Naive thymus-derived CD4-positive, alpha-beta T cell (primary cell): ENCODE measurements at regions of chr1 and their contacts with region 1.

Region 1: DNA sequence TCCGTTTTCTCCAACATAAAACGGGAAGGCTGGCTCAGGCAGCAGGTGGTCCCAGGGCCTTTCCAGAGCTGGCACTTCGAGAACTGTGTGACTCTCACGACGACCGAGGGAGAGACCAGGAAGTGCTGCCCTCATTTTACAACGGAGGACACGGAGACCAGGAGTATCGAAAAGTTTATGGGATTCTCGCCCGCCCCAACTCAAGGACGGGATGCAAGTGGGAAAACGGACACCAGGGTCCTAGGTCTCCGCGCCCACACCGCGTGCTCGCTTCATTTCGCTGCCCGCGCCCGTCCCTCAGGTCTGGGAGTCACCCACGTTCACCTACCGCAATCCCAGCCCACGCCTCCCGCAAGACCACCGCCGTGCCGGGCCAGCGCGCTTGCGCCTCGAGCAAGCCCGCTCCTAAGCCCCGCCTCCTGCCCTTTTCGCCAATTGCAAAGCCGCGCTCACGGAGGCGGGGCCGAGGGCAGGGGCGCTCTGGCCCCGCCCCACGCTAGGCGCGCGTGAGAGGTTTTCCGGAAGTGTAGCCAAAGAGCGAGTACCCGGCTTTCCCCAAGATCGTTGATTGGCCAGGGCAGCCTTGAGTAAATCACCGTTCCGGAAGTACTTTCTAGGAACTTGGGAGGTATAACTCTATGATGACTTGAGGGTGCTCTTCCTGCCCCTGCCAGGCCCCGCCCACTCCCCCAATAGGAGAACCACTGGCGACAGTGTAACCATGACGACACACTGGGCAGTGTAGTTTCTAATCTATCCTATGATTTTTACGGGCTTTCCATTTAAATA is at the start of gene PARS2:
- DNase-seq: peak; percentile 89 to 98 (median 97)
- ATAC-seq: peak; percentile 96
- H3K4me3 ChIP-seq: peak within 1 kb of the TSS; percentile 95
- H3K4me3 Mint-ChIP-seq: peak within 1 kb of the TSS; percentile 94 to 97 (median 96)
- H3K27ac ChIP-seq: peak within 1 kb of the TSS; percentile 83
- H3K27ac Mint-ChIP-seq: peak within 1 kb of the TSS; percentile 81 to 97 (median 93)
- H3K4me1 ChIP-seq: peaks cover 0 to 9% of the 10 kb centered on the region in 2 donors
- H3K4me1 Mint-ChIP-seq: peaks cover 14 to 26% (median 24%) of the 10 kb centered on the region in 7 donors
- H3K27me3 ChIP-seq: no peaks in the 10 kb centered on the region
- H3K27me3 Mint-ChIP-seq: no peaks in the 10 kb centered on the region
- total RNA-seq, gene PARS2: 0.66 to 7.6 (median 4.7) TPM

Region 2: GRCh38 chr1:52920791-52921291 is 1843.5 kb before region 1 on chr1:
- CTCF ChIA-PET with region 1: no interaction called
- POLR2A ChIA-PET with region 1: no interaction called
- intact Hi-C with region 1: loop called in 1 of 2 experiments (anchors 5 kb)
- DNase-seq: no peak
- ATAC-seq: no peak
- H3K4me3 ChIP-seq: peak overlapping the region; percentile 67
- H3K4me3 Mint-ChIP-seq: peak overlapping the region; percentile 65 to 89 (median 84)
- H3K27ac ChIP-seq: peak overlapping the region; percentile 74
- H3K27ac Mint-ChIP-seq: peak overlapping the region; percentile 51 to 86 (median 70)
- H3K4me1 ChIP-seq: peaks cover 0 to 12% of the 10 kb centered on the region in 2 donors
- H3K4me1 Mint-ChIP-seq: peaks cover 16 to 41% (median 31%) of the 10 kb centered on the region in 7 donors
- H3K27me3 ChIP-seq: no peaks in the 10 kb centered on the region
- H3K27me3 Mint-ChIP-seq: peaks cover 0 to 4% (median 0%) of the 10 kb centered on the region in 5 donors

Region 3: DNA sequence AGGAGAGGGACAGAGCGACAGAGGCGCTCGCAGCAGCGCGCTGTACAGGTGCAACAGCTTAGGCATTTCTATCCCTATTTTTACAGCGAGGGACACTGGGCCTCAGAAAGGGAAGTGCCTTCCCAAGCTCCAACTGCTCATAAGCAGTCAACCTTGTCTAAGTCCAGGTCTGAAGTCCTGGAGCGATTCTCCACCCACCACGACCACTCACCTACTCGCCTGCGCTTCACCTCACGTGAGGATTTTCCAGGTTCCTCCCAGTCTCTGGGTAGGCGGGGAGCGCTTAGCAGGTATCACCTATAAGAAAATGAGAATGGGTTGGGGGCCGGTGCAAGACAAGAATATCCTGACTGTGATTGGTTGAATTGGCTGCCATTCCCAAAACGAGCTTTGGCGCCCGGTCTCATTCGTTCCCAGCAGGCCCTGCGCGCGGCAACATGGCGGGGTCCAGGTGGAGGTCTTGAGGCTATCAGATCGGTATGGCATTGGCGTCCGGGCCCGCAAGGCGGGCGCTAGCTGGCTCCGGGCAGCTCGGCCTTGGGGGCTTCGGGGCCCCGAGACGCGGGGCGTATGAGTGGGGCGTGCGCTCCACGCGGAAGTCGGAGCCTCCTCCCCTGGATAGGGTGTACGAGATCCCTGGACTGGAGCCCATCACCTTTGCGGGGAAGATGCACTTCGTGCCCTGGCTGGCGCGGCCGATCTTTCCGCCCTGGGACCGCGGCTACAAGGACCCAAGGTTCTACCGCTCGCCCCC is 564.4 kb before region 1 on chr1 and contains the starts of genes CYB5RL and MRPL37:
- CTCF ChIA-PET with region 1: no interaction called
- POLR2A ChIA-PET with region 1: no interaction called
- intact Hi-C with region 1: loop called in 1 of 2 experiments (anchors 1 kb)
- DNase-seq: peak; percentile 65 to 94 (median 91)
- ATAC-seq: peak; percentile 99
- H3K4me3 ChIP-seq: peak within 1 kb of the TSS; percentile 69
- H3K4me3 Mint-ChIP-seq: peak within 1 kb of the TSS; percentile 90 to 96 (median 92)
- H3K27ac ChIP-seq: peak within 1 kb of the TSS; percentile 81
- H3K27ac Mint-ChIP-seq: peak within 1 kb of the TSS; percentile 64 to 93 (median 87)
- H3K4me1 ChIP-seq: peaks cover 9 to 17% of the 10 kb centered on the region in 2 donors
- H3K4me1 Mint-ChIP-seq: peaks cover 27 to 44% (median 40%) of the 10 kb centered on the region in 7 donors
- H3K27me3 ChIP-seq: no peaks in the 10 kb centered on the region
- H3K27me3 Mint-ChIP-seq: no peaks in the 10 kb centered on the region
- total RNA-seq, gene CYB5RL: 5.1 to 13.5 (median 7.1) TPM
- total RNA-seq, gene MRPL37: 25.4 to 86.7 (median 36.4) TPM

Region 4: GRCh38 chr1:54715493-54716298 is 48.6 kb before region 1 on chr1 and contains the start of gene TTC4:
- CTCF ChIA-PET with region 1: no interaction called
- POLR2A ChIA-PET with region 1: interaction called, 8 read pairs
- intact Hi-C with region 1: loop called (anchors 1 kb)
- DNase-seq: peak; percentile 71 to 92 (median 85)
- ATAC-seq: peak; percentile 99
- H3K4me3 ChIP-seq: peak within 1 kb of the TSS; percentile 86
- H3K4me3 Mint-ChIP-seq: peak within 1 kb of the TSS; percentile 81 to 96 (median 88)
- H3K27ac ChIP-seq: peak within 1 kb of the TSS; percentile 84
- H3K27ac Mint-ChIP-seq: peak within 1 kb of the TSS; percentile 58 to 94 (median 91)
- H3K4me1 ChIP-seq: peaks cover 14 to 15% of the 10 kb centered on the region in 2 donors
- H3K4me1 Mint-ChIP-seq: peaks cover 15 to 42% (median 34%) of the 10 kb centered on the region in 7 donors
- H3K27me3 ChIP-seq: no peaks in the 10 kb centered on the region
- H3K27me3 Mint-ChIP-seq: no peaks in the 10 kb centered on the region
- total RNA-seq, gene TTC4: 11.6 to 25.8 (median 21.4) TPM

Region 5: GRCh38 chr1:54774820-54775498 is 10.6 kb after region 1 on chr1:
- CTCF ChIA-PET with region 1: no interaction called
- POLR2A ChIA-PET with region 1: no interaction called
- intact Hi-C with region 1: no loop called
- DNase-seq: no peak
- ATAC-seq: no peak
- H3K4me3 ChIP-seq: no peak overlapping the region
- H3K4me3 Mint-ChIP-seq: no peak overlapping the region
- H3K27ac ChIP-seq: no peak overlapping the region
- H3K27ac Mint-ChIP-seq: no peak overlapping the region
- H3K4me1 ChIP-seq: no peaks in the 10 kb centered on the region
- H3K4me1 Mint-ChIP-seq: peaks cover 0 to 1% (median 0%) of the 10 kb centered on the region in 7 donors
- H3K27me3 ChIP-seq: no peaks in the 10 kb centered on the region
- H3K27me3 Mint-ChIP-seq: no peaks in the 10 kb centered on the region

Region 6: DNA sequence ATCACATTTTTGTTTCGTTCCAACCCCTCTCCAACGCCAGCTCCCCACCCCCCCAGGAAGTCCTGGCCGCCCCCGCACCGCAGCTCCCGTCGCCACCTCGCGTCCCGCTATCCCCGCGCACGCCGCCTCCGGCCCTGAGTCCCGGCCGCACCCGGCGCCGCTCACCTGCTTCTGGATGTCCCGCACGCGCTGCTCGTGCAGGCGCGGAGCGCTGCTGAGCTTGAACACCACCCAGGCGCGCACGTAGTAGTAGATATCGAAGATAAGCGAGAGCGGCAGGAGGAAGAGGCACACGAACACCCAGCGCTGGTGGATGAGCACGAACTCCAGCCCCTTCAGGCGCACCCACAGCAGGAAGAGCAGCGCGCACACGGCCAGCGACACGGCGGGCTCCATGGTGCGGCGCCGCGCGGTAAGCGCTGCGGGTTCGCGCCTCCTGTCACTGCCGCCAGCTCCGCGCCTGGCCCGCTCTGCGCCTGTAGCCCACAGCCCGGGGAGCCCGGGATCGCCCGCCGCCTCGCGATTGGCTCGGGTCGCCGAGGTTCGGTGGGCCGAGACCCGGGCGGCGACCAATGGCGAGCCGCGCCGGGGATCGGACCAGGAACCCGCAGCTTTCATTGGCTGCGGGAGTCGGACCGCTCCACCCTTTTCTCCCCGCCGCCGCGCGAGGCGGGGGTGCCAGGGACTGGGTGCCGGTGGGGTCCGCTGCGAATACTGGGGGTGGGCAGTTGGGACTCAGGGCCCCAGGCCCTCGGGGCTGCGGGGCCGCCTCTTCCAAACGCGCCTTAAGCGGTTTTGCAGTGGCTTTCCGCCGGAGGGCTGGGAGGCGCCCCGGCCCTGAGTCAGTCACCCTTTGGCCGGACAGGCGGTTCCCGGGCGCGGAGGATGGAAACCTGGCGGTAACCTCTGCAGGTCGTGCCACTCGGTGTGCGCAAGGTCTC is 122.7 kb after region 1 on chr1 and contains the start of gene DHCR24:
- CTCF ChIA-PET with region 1: no interaction called
- POLR2A ChIA-PET with region 1: no interaction called
- intact Hi-C with region 1: loop called (anchors 1 to 2 kb)
- DNase-seq: peak; percentile 43 to 90 (median 58)
- ATAC-seq: peak; percentile 93
- H3K4me3 ChIP-seq: peak within 1 kb of the TSS; percentile 66
- H3K4me3 Mint-ChIP-seq: peak within 1 kb of the TSS; percentile 89 to 99 (median 96)
- H3K27ac ChIP-seq: peak within 1 kb of the TSS; percentile 27
- H3K27ac Mint-ChIP-seq: peak within 1 kb of the TSS; percentile 25 to 89 (median 73)
- H3K4me1 ChIP-seq: peaks cover 0 to 11% of the 10 kb centered on the region in 2 donors
- H3K4me1 Mint-ChIP-seq: peaks cover 13 to 55% (median 37%) of the 10 kb centered on the region in 7 donors
- H3K27me3 ChIP-seq: no peaks in the 10 kb centered on the region
- H3K27me3 Mint-ChIP-seq: peaks cover 0 to 18% (median 3%) of the 10 kb centered on the region in 5 donors
- total RNA-seq, gene DHCR24: 2.7 to 103 (median 8.3) TPM